B cell (primary cell): ENCODE measurements at regions of chr6 and their contacts with region 1.

Region 1: DNA sequence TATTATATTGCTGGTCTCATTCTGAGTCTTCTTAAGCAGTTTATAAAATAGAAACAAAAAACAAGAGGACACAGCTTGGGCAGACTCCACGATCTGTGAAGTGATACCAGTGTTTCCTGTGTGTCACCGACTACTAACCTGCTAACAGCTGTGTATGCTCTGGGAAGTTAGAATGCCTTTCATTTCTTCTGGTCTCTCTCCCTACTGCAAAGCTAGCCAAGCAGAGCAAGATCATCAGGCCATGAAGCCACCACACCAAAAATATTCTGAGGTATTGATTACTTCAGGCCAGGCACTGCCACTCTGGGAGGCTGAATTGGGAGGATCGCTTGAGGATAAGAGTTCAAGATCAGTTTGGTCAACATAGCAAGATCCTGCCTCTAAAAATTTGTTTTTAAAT is 46.9 kb upstream of the SMIM29 start:
- DNase-seq: peak; percentile 74
- ATAC-seq: peak; percentile 91
- H3K4me3 ChIP-seq: peak overlapping the region in 3 of 5 experiments; percentile 16 to 23 (median 21)
- H3K4me3 Mint-ChIP-seq: peak overlapping the region; percentile 76
- H3K27ac ChIP-seq: peak overlapping the region; percentile 75 to 82
- H3K27ac Mint-ChIP-seq: peak overlapping the region; percentile 96
- H3K4me1 ChIP-seq: peaks cover 51 to 62% of the 10 kb centered on the region in 2 donors
- H3K4me1 Mint-ChIP-seq: peaks cover 66% of the 10 kb centered on the region
- H3K27me3 ChIP-seq: no peaks in the 10 kb centered on the region
- H3K27me3 Mint-ChIP-seq: no peaks in the 10 kb centered on the region
- CTCF ChIP-seq: no peak

Region 2: GRCh38 chr6:33288921-33289748 is 1006.6 kb before region 1 on chr6 and contains the starts of genes PFDN6 and WDR46:
- CTCF ChIA-PET with region 1: no interaction called
- POLR2A ChIA-PET with region 1: no interaction called
- intact Hi-C with region 1: no loop called
- DNase-seq: peak; percentile 93
- ATAC-seq: peak; percentile 96
- H3K4me3 ChIP-seq: peak within 1 kb of the TSS; percentile 78 to 99 (median 86)
- H3K4me3 Mint-ChIP-seq: peak within 1 kb of the TSS; percentile 93
- H3K27ac ChIP-seq: peak within 1 kb of the TSS; percentile 42 to 68
- H3K27ac Mint-ChIP-seq: peak within 1 kb of the TSS; percentile 86
- H3K4me1 ChIP-seq: peaks cover 19 to 25% of the 10 kb centered on the region in 2 donors
- H3K4me1 Mint-ChIP-seq: peaks cover 38% of the 10 kb centered on the region
- H3K27me3 ChIP-seq: no peaks in the 10 kb centered on the region
- H3K27me3 Mint-ChIP-seq: no peaks in the 10 kb centered on the region
- CTCF ChIP-seq: no peak
- total RNA-seq, gene PFDN6: 44.7 and 51.1 TPM in 2 replicates
- total RNA-seq, gene WDR46: 66.4 and 77.2 TPM in 2 replicates

Region 3: DNA sequence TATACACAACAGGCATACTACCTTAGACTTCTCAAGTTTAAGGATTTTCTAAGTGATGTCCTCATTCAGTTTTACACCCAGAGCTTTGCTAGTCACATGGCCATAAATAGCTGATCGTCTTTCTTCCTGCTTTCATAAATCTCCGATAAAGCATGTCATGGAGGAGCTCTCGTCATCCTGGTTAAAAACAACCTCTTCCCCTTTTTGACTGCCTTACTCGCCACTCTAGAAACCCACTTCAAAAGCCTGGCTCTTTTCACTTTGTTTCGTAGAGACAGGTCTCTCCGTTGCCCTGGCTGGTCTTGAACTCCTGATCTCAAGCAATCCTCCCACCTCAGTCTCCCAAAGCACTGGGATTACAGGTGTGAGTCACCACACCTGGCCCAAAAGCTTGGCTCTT is 20.1 kb after region 1 on chr6:
- CTCF ChIA-PET with region 1: interaction called, 6 read pairs
- POLR2A ChIA-PET with region 1: interaction called, 3 read pairs
- intact Hi-C with region 1: loop called (anchors 2 kb)
- DNase-seq: peak; percentile 82
- ATAC-seq: peak; percentile 86
- H3K4me3 ChIP-seq: peak overlapping the region in 4 of 5 experiments; percentile 6 to 45 (median 22)
- H3K4me3 Mint-ChIP-seq: peak overlapping the region; percentile 75
- H3K27ac ChIP-seq: peak overlapping the region; percentile 82 to 89
- H3K27ac Mint-ChIP-seq: peak overlapping the region; percentile 94
- H3K4me1 ChIP-seq: peaks cover 50 to 51% of the 10 kb centered on the region in 2 donors
- H3K4me1 Mint-ChIP-seq: peaks cover 65% of the 10 kb centered on the region
- H3K27me3 ChIP-seq: no peaks in the 10 kb centered on the region
- H3K27me3 Mint-ChIP-seq: no peaks in the 10 kb centered on the region
- CTCF ChIP-seq: no peak

Region 4: GRCh38 chr6:34341481-34341971 is 45.8 kb after region 1 on chr6:
- CTCF ChIA-PET with region 1: no interaction called
- POLR2A ChIA-PET with region 1: no interaction called
- intact Hi-C with region 1: loop called (anchors 5 kb)
- DNase-seq: no peak
- ATAC-seq: no peak
- H3K4me3 ChIP-seq: no peak overlapping the region
- H3K4me3 Mint-ChIP-seq: no peak overlapping the region
- H3K27ac ChIP-seq: no peak overlapping the region
- H3K27ac Mint-ChIP-seq: peak overlapping the region; percentile 13
- H3K4me1 ChIP-seq: peaks cover 26 to 29% of the 10 kb centered on the region in 2 donors
- H3K4me1 Mint-ChIP-seq: peaks cover 64% of the 10 kb centered on the region
- H3K27me3 ChIP-seq: no peaks in the 10 kb centered on the region
- H3K27me3 Mint-ChIP-seq: no peaks in the 10 kb centered on the region
- CTCF ChIP-seq: no peak